Activated CD8-positive, alpha-beta T cell treated with anti-CD3 and anti-CD28 coated beads for 36 hours (primary cell): ENCODE measurements at regions of chr10 and their contacts with region 1.

Region 1: GRCh38 chr10:74900297-74900696 is 73.9 kb downstream of the KAT6B start:
- DNase-seq: peak; percentile 62
- ATAC-seq: peak; percentile 72
- H3K4me3 Mint-ChIP-seq: peak overlapping the region; percentile 49
- H3K27ac Mint-ChIP-seq: peak overlapping the region; percentile 87
- H3K4me1 Mint-ChIP-seq: peaks cover 65% of the 10 kb centered on the region
- H3K27me3 Mint-ChIP-seq: no peaks in the 10 kb centered on the region
- CTCF ChIP-seq: no peak

Region 2: GRCh38 chr10:74913377-74913979 is 13.2 kb after region 1 on chr10:
- CTCF ChIA-PET with region 1: interaction called, 24 read pairs
- POLR2A ChIA-PET with region 1: no interaction called
- intact Hi-C with region 1: no loop called
- DNase-seq: peak; percentile 8
- ATAC-seq: peak; percentile 70
- H3K4me3 Mint-ChIP-seq: peak overlapping the region; percentile 53
- H3K27ac Mint-ChIP-seq: peak overlapping the region; percentile 46
- H3K4me1 Mint-ChIP-seq: peaks cover 39% of the 10 kb centered on the region
- H3K27me3 Mint-ChIP-seq: no peaks in the 10 kb centered on the region
- CTCF ChIP-seq: no peak